Activated CD4-positive, alpha-beta memory T cell treated with anti-CD3 and anti-CD28 coated beads for 36 hours (primary cell): ENCODE measurements at regions of chr14 and their contacts with region 1.

Region 1: GRCh38 chr14:55085060-55085660 is 33.7 kb downstream of the MAPK1IP1L start:
- DNase-seq: no peak
- H3K4me3 Mint-ChIP-seq: no peak overlapping the region
- H3K27ac Mint-ChIP-seq: no peak overlapping the region
- H3K4me1 Mint-ChIP-seq: peaks cover 3% of the 10 kb centered on the region
- H3K27me3 Mint-ChIP-seq: no peaks in the 10 kb centered on the region

Region 2: GRCh38 chr14:55019968-55020554 is 65.1 kb before region 1 on chr14:
- CTCF ChIA-PET with region 1: no interaction called
- POLR2A ChIA-PET with region 1: no interaction called
- intact Hi-C with region 1: no loop called
- DNase-seq: no peak
- H3K4me3 Mint-ChIP-seq: no peak overlapping the region
- H3K27ac Mint-ChIP-seq: no peak overlapping the region
- H3K4me1 Mint-ChIP-seq: peaks cover 16% of the 10 kb centered on the region
- H3K27me3 Mint-ChIP-seq: no peaks in the 10 kb centered on the region

Region 3: DNA sequence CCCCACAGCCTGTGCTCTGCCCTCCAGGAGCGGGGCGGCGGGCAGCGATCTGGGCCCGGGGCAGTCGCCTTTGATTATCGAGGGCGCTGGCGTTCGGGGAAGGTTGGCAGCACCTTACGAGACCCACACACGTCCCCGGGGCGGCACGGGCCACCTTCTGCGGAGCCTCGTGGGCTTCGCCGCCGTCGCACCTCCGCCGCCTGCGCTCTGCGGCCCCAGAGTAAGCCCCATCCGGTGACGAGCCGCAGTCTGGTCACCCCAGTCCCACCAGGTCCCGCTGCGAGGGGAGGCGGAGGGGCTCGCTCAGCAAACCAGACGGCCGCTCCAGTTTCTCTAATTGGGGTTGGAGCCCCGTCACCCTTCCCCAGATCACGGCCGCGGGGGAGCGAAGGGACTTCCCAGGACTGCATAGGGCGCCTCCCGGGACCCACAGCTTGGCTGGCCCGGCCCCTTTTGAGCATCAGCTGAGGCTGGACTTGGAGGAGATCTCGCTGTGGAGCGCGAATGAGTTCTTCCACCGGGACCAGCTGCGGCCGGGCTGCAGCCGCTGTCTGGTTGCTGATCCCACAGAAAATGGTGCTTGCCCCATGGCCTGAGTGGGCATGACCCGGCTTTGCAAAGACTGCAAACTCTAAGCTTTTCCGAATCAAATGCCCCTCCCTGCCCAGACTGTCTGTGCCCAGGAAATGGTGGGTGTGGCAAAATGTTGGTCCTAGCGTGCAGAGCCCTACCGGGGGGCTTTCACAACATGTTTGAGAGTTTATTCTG is 44.5 kb after region 1 on chr14:
- CTCF ChIA-PET with region 1: interaction called, 4 read pairs
- POLR2A ChIA-PET with region 1: no interaction called
- intact Hi-C with region 1: loop called (anchors 5 kb)
- DNase-seq: peak; percentile 64
- H3K4me3 Mint-ChIP-seq: peak overlapping the region; percentile 69
- H3K27ac Mint-ChIP-seq: no peak overlapping the region
- H3K4me1 Mint-ChIP-seq: peaks cover 26% of the 10 kb centered on the region
- H3K27me3 Mint-ChIP-seq: peaks cover 20% of the 10 kb centered on the region

Region 4: DNA sequence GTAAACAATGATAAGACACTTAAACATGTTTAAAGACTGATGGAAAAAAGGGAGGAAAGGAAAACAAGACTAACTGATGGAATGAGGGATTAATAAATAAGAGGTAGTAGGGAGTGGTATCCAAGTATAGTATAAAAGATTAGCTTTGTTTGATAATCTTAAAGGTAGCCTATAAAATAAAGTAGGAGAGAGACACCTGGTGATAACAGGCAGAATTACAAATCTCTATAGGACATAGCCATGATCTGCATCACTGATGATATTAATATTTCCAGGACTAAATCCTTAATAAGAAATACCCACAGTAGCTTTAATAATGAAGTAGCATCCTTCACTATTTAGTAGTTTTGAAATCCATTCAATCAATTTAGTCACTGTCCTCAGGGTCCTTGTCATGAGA is 75.8 kb after region 1 on chr14:
- CTCF ChIA-PET with region 1: interaction called, 81 read pairs
- POLR2A ChIA-PET with region 1: no interaction called
- intact Hi-C with region 1: loop called (anchors 1 kb)
- DNase-seq: no peak
- H3K4me3 Mint-ChIP-seq: no peak overlapping the region
- H3K27ac Mint-ChIP-seq: no peak overlapping the region
- H3K4me1 Mint-ChIP-seq: peaks cover 11% of the 10 kb centered on the region
- H3K27me3 Mint-ChIP-seq: no peaks in the 10 kb centered on the region

Region 5: DNA sequence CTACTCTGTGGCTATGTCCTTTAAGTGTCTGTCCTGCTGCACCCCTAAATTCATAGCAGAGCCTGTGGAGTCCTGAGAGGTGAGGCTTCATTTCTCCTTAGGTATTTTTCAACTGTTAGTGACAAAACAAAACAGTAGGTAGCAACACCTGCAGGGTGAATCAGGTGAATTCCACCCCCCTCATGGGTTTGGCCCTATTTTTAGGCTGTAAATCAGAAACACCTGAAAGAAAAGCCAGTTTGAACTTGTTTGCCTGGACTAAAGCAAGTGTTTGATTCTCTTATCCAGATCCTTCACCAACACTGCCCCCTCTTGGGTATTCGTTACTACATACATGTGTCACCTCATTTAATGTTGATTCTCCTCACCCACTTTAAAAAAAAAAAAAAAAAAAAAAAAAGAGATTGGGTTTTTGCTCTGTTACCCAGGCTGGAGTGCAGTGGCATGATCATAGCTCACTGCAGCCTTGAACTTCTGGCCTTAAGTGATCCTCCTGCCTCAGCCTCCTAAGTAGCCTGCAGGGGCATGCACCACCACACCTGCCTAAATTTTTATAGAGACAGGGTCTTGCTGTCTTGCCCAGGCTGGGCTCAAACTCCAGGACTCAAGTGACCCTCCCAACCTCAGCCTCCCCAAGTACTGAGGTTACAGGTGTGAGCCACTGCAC is 345.0 kb after region 1 on chr14:
- CTCF ChIA-PET with region 1: no interaction called
- POLR2A ChIA-PET with region 1: no interaction called
- intact Hi-C with region 1: loop called (anchors 5 kb)
- DNase-seq: peak; percentile 24
- H3K4me3 Mint-ChIP-seq: no peak overlapping the region
- H3K27ac Mint-ChIP-seq: peak overlapping the region; percentile 20
- H3K4me1 Mint-ChIP-seq: peaks cover 28% of the 10 kb centered on the region
- H3K27me3 Mint-ChIP-seq: no peaks in the 10 kb centered on the region